GM12878 (cell line): ENCODE measurements at regions of chr1 and their contacts with region 1.

Region 1: GRCh38 chr1:93345633-93346420 is at the start of gene DR1:
- DNase-seq: peak; percentile 67
- ATAC-seq: peak; percentile 74
- H3K4me3 ChIP-seq: peak within 1 kb of the TSS; percentile 95
- H3K27ac ChIP-seq: peak within 1 kb of the TSS; percentile 99
- H3K4me1 ChIP-seq: peaks cover 4% of the 10 kb centered on the region; the same call in 1 of the 2 replicates
- H3K27me3 ChIP-seq: no peaks in the 10 kb centered on the region
- CTCF ChIP-seq: no peak
- EP300 ChIP-seq: 0 out of 4 replicates have a peak, but pooled peaks of 1 of the 2 experiments have one; percentile 19
- POLR2A ChIP-seq: peak; percentile 97
- RAD21 ChIP-seq: no peak
- polyA plus RNA-seq, gene DR1: 7.4 to 12.7 TPM

Region 2: DNA sequence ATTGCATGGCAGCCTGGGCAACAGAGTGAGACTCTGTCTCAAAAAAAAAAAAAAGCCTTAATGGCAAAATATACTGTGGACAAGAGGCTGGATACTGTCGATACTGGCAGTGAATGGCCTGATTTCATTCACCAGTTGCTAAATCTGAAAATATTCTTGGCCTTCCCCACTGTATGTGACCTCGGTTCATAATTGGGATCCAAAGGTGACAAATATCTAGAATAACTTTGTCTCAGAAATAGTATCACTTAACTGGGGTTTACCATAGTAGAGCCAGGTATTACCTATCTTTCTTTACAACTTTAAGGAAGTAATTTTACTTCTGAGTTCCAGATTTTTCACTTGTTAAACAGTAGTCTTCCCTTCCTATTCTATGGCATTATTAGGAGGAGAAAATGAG is 258.3 kb before region 1 on chr1:
- CTCF ChIA-PET with region 1: no interaction called
- POLR2A ChIA-PET with region 1: no interaction called
- RAD21 ChIA-PET with region 1: no interaction called
- SMC1A ChIA-PET with region 1: no interaction called
- in situ Hi-C with region 1: no loop called
- intact Hi-C with region 1: loop called (anchors 5 kb)
- DNase-seq: no peak
- ATAC-seq: peak; percentile 69
- H3K4me3 ChIP-seq: no peak overlapping the region
- H3K27ac ChIP-seq: peak overlapping the region; percentile 46
- H3K4me1 ChIP-seq: no peaks in the 10 kb centered on the region
- H3K27me3 ChIP-seq: no peaks in the 10 kb centered on the region
- CTCF ChIP-seq: no peak
- EP300 ChIP-seq: no peak
- POLR2A ChIP-seq: no peak
- RAD21 ChIP-seq: no peak

Region 3: GRCh38 chr1:93179886-93180722 is 165.7 kb before region 1 on chr1 and contains the start of gene TMED5:
- CTCF ChIA-PET with region 1: no interaction called
- POLR2A ChIA-PET with region 1: no interaction called
- RAD21 ChIA-PET with region 1: no interaction called
- SMC1A ChIA-PET with region 1: interaction called, 4 read pairs
- in situ Hi-C with region 1: no loop called
- intact Hi-C with region 1: loop called (anchors 5 kb)
- DNase-seq: peak; percentile 90
- ATAC-seq: peak; percentile 88
- H3K4me3 ChIP-seq: peak within 1 kb of the TSS; percentile 95
- H3K27ac ChIP-seq: peak within 1 kb of the TSS; percentile 99
- H3K4me1 ChIP-seq: no peaks in the 10 kb centered on the region; the same call in 1 of the 2 replicates
- H3K27me3 ChIP-seq: no peaks in the 10 kb centered on the region
- CTCF ChIP-seq: peak in 2 of 3 experiments; percentile 1 to 9; a peak in 2 of 6 replicates
- EP300 ChIP-seq: no peak; a peak in 1 of 4 replicates
- POLR2A ChIP-seq: peak; percentile 70
- RAD21 ChIP-seq: no peak
- polyA plus RNA-seq, gene TMED5: 18.5 to 19.9 TPM